ENCODE measurements at regions of chr2 and their contacts with region 1.

Region 1: DNA sequence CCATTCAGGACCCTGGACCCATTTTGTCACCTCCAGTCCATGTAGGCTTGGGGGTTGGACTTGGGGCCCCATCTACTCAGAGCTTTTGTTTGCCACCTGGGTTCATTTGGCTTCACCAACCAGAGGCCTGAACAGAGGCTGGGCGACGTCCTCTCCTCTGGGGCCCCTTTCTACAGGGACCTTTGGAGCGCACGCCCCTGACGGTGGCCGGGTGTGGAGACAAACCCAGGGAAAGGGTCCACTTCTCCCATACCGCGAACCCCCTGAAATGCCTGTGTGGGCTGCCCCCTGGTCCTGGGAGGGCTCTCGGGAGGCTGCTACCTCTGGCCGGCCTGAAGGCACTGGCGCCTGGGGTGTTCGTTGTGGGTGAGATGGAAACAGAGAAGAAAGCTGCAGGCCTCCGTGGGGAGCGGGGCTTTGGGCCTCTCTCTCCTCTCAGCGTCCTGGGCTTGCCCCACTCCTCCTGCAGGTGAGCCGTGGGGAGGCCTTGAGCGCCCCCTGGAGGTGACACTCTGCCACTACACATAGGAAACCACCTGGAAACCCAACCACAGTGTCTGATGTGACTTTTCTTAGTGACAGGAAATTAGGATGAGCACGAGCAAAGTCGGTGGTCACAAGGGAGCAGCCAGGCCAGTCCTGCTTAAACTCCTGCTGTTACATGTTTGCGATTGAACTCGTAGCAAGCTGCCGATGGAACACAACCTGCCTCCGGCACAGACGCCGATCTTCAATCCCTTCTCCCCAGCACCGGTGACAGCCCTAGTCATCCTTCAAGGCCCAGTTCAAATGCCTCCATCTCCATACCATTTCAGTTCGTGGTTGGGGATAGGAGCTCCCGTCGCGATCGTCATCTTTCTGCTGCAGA is 12.0 kb upstream of the NTSR2 start:
- DNase-seq: peak; percentile 80
- H3K4me3 Mint-ChIP-seq: no peak overlapping the region
- H3K27ac Mint-ChIP-seq: no peak overlapping the region
- H3K4me1 Mint-ChIP-seq: peaks cover 3% of the 10 kb centered on the region
- H3K27me3 Mint-ChIP-seq: peaks cover 2% of the 10 kb centered on the region

Region 2: DNA sequence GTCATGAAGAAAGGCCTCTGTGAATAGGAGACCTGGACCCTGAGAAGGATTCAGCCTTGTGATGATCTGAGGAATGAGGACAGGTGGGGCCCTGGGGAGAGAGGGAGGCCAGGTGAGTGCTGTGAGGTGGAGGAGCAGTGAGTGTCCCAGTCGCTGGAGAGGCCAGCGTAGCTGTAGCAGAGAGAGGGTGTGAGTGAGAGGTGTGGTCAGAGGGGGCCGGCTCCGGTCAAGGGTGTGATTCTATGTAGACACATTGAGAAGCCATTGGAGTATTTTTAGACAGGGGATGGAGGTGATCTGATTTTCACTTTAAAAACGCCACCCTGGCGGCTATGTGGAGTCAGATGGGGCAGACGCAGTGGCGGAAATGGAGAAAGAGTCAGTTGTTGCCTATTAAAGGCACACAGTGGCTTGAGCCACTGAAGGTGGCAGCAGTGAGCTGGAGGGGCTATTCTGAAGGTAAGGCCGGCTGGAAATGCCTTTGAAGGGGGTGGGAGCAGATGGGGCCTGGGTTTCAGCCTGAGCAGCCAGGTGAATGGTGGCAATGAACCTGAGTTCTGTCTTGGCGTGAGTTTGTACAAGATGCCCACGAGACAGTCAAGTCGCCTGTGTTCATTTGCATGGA is 92.5 kb before region 1 on chr2:
- CTCF ChIA-PET with region 1: interaction called, 5 read pairs
- intact Hi-C with region 1: loop called (anchors 1 kb)
- DNase-seq: no peak
- H3K4me3 Mint-ChIP-seq: no peak overlapping the region
- H3K27ac Mint-ChIP-seq: no peak overlapping the region
- H3K4me1 Mint-ChIP-seq: peaks cover under 1% of the 10 kb centered on the region
- H3K27me3 Mint-ChIP-seq: peaks cover 3% of the 10 kb centered on the region